ENCODE measurements at regions of chr3 and their contacts with region 1.

Region 1: DNA sequence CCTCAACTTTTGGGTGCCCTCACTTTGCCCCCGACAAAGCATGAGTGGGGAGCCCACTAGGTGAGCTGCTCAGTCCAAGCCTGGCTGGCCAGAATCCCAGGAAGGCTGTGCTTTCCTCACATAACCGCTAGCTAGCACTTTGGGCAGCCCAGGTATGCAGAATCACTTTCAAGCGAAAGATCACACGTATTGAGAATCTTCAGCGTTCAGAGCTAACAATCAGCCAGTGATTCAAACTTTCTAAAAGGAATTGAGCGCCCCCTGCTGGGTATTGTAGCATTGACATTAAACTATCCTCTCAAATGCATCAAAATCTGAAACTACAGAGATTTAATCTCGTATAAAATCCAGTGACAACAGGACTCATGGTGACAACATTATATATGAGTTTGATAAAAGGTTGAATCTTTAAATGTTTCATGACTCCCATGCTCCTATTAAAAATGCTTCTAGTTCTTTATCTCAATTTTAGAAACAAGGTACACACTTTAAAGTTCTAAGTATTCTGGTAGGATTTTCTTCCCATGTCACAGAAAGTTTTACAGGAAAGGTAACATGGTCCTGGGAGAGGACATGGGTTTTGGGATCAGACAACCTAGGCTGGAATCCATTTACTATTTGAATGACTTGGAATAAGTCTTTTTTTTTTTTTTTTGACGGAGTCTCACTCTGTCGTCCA is 11.8 kb downstream of the ANAPC13 start:
- DNase-seq: no peak
- H3K4me3 ChIP-seq: no peak overlapping the region
- H3K27ac ChIP-seq: peak overlapping the region in 1 of 4 donors; percentile 1
- H3K4me1 ChIP-seq: peaks cover 23 to 61% (median 29%) of the 10 kb centered on the region in 3 donors
- H3K27me3 ChIP-seq: no peaks in the 10 kb centered on the region
- CTCF ChIP-seq: peak; percentile 74 to 91 (median 80)
- POLR2A ChIP-seq: no peak

Region 2: DNA sequence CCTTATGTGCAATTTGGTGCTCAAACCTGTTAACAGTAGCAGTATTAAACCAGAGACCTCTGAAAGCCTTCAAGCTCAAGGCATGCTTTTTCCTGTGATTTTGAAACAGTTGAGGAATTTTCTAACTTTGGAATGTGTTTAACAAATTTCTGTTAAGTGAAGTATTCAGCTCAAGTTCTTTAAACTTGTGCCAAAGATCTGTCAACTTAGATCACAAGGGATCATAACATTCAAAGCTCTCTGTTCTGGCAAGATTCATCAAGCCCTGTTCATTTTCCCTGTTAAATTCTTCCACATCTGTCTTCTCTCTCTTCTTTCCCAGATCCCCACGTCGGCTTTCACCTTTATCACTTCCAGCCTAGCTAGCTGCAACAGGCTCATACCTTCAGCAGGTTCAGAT is 194.5 kb before region 1 on chr3:
- intact Hi-C with region 1: no loop called
- DNase-seq: no peak
- H3K4me3 ChIP-seq: no peak overlapping the region
- H3K27ac ChIP-seq: peak overlapping the region in 1 of 4 donors; percentile 14
- H3K4me1 ChIP-seq: peaks cover 0 to 41% (median 12%) of the 10 kb centered on the region in 3 donors
- H3K27me3 ChIP-seq: no peaks in the 10 kb centered on the region
- CTCF ChIP-seq: no peak
- POLR2A ChIP-seq: no peak

Region 3: DNA sequence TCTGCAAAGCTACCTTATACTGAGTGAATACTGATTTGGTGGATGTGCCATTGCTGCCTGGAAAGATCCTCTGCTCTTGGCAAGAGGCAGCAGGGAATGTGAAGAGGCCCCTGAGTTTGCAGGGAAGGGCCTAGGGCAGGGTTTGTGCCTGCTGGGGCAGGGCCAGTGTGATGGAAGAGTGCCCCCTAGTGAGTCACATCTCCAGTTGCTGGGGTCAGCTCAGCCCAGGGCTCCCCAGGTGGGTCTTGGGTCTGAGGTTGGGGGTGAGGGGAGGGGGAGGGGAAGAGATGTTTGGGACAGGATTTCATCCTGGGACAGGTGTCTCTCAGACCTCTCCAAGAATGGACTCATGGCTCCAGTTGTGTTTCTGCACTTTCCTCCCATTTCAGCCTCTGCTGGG is 95.6 kb before region 1 on chr3:
- intact Hi-C with region 1: loop called (anchors 5 kb)
- DNase-seq: no peak
- H3K4me3 ChIP-seq: no peak overlapping the region
- H3K27ac ChIP-seq: peak overlapping the region in 2 of 4 donors; percentile 0 to 21
- H3K4me1 ChIP-seq: peaks cover 26 to 79% (median 37%) of the 10 kb centered on the region in 3 donors
- H3K27me3 ChIP-seq: peaks cover 0 to 17% (median 0%) of the 10 kb centered on the region in 4 donors
- CTCF ChIP-seq: peak in 4 of 6 experiments; percentile 6 to 35 (median 32)
- POLR2A ChIP-seq: no peak

Region 4: GRCh38 chr3:134392336-134392983 is 81.5 kb before region 1 on chr3:
- intact Hi-C with region 1: no loop called
- DNase-seq: no peak
- H3K4me3 ChIP-seq: no peak overlapping the region
- H3K27ac ChIP-seq: peak overlapping the region in 2 of 4 donors; percentile 15 to 48
- H3K4me1 ChIP-seq: peaks cover 0 to 28% (median 4%) of the 10 kb centered on the region in 3 donors
- H3K27me3 ChIP-seq: no peaks in the 10 kb centered on the region
- CTCF ChIP-seq: no peak
- POLR2A ChIP-seq: no peak

Region 5: GRCh38 chr3:134517791-134518190 is 43.8 kb after region 1 on chr3:
- intact Hi-C with region 1: no loop called
- DNase-seq: no peak
- H3K4me3 ChIP-seq: no peak overlapping the region
- H3K27ac ChIP-seq: no peak overlapping the region
- H3K4me1 ChIP-seq: peaks cover 0 to 9% (median 0%) of the 10 kb centered on the region in 3 donors
- H3K27me3 ChIP-seq: no peaks in the 10 kb centered on the region
- CTCF ChIP-seq: no peak
- POLR2A ChIP-seq: no peak

Region 6: GRCh38 chr3:134552784-134553183 is 78.8 kb after region 1 on chr3:
- intact Hi-C with region 1: no loop called
- DNase-seq: no peak
- H3K4me3 ChIP-seq: no peak overlapping the region
- H3K27ac ChIP-seq: no peak overlapping the region
- H3K4me1 ChIP-seq: no peaks in the 10 kb centered on the region
- H3K27me3 ChIP-seq: no peaks in the 10 kb centered on the region
- CTCF ChIP-seq: no peak
- POLR2A ChIP-seq: no peak

Measured in esophagus squamous epithelium (tissue), 5 donors.